Sigmoid colon (tissue), 7 donors: ENCODE measurements at regions of chr15 and their contacts with region 1.

Region 1: GRCh38 chr15:76139368-76140073 is 79.7 kb downstream of the TMEM266 start:
- DNase-seq: no peak
- H3K4me3 ChIP-seq: no peak overlapping the region
- H3K27ac ChIP-seq: no peak overlapping the region
- H3K4me1 ChIP-seq: peaks cover 0 to 8% (median 2%) of the 10 kb centered on the region in 4 donors
- H3K27me3 ChIP-seq: peaks cover 0 to 4% (median 0%) of the 10 kb centered on the region in 3 donors
- CTCF ChIP-seq: peak; percentile 38 to 88 (median 83)
- EP300 ChIP-seq: no peak
- POLR2A ChIP-seq: no peak

Region 2: DNA sequence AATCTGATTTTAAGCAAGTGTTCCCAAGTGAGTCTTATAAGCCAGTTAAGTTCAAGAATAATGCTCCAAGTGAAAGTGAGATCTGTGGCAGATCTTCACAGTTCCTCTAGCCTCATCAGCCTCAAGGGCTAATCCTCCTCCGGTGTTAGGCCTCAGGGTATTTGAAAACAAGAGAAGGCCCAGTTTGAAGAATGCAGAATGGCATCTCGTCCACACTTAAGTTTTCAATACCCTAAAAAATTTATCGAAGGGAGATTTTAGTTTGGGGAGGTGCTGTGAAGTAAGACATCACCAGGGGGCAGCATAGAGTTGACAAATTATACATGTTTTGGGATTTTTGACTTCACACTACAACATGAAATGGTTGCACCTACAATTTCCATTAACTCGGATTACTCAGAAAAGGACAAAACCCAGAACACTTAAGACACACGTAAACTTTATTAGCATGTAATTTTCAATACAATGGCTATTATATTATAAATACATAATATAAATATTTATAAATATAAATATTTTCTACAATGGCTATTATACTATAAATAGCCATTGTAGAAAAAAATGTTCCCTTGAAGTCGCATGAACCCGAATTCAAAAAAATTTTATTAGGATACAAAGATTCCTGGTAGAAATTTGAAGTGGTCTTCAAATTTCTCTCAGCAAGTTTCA is 82.1 kb before region 1 on chr15:
- intact Hi-C with region 1: loop called (anchors 1 kb)
- DNase-seq: no peak
- H3K4me3 ChIP-seq: peak overlapping the region in 1 of 4 donors; percentile 23
- H3K27ac ChIP-seq: no peak overlapping the region
- H3K4me1 ChIP-seq: peaks cover 0 to 19% (median 16%) of the 10 kb centered on the region in 4 donors
- H3K27me3 ChIP-seq: peaks cover 0 to 22% (median 14%) of the 10 kb centered on the region in 3 donors
- CTCF ChIP-seq: peak in 3 of 4 experiments; percentile 51 to 71 (median 59)
- EP300 ChIP-seq: no peak
- POLR2A ChIP-seq: no peak